A549 (cell line): ENCODE measurements at regions of chr17 and their contacts with region 1.

Region 1: GRCh38 chr17:700504-701094 is 14.0 kb downstream of the VPS53 start:
- DNase-seq: peak; percentile 35 to 73
- ATAC-seq: peak in 1 of 2 experiments; percentile 71; a peak in 2 of 6 replicates
- H3K4me3 ChIP-seq: no peak overlapping the region
- H3K27ac ChIP-seq: peak overlapping the region in 1 of 2 experiments; percentile 16; a peak in 1 of 6 replicates
- H3K4me1 ChIP-seq: peaks cover 8% of the 10 kb centered on the region
- CTCF ChIP-seq: peak; percentile 94
- EP300 ChIP-seq: no peak
- POLR2A ChIP-seq: no peak
- RAD21 ChIP-seq: peak; percentile 91 to 95

Region 2: DNA sequence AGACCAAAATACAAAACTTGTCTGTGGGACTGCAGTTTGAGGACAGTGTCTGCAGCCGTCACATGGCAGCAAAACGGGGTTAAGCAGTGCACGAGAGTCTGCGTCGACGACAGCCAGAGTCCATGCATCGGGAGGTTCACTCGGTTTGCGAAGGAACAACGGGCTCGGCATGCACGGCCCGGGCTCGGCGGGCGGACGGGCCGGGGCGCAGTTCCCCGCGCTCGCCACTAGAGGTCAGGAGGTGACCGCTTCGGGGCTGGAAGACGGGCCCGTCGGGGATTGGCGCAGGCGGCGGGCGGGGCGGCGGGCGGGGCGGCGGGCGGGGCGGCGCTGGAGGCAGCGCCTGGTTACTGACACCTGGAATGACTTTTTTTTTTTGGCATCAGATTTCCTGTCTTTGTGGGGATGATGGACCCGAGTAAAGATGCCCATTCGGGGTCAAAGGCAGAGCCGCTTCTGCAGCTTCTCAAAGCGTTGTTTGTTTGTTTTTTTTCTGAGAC is 556.8 kb before region 1 on chr17:
- CTCF ChIA-PET with region 1: interaction called, 18 read pairs
- POLR2A ChIA-PET with region 1: no interaction called
- DNase-seq: peak; percentile 85 to 92
- ATAC-seq: peak; percentile 79 to 89
- H3K4me3 ChIP-seq: no peak overlapping the region
- H3K27ac ChIP-seq: no peak overlapping the region
- H3K4me1 ChIP-seq: 0 out of 3 replicates have a peak, but pooled peaks cover 4% of the 10 kb centered on the region
- CTCF ChIP-seq: peak; percentile 95
- EP300 ChIP-seq: no peak
- POLR2A ChIP-seq: no peak
- RAD21 ChIP-seq: peak; percentile 80 to 98

Region 3: GRCh38 chr17:416293-417206 is 284.0 kb before region 1 on chr17:
- CTCF ChIA-PET with region 1: interaction called, 410 read pairs
- POLR2A ChIA-PET with region 1: interaction called, 7 read pairs
- DNase-seq: no peak
- ATAC-seq: no peak
- H3K4me3 ChIP-seq: no peak overlapping the region
- H3K27ac ChIP-seq: no peak overlapping the region
- H3K4me1 ChIP-seq: peaks cover 8% of the 10 kb centered on the region
- CTCF ChIP-seq: no peak
- EP300 ChIP-seq: no peak
- POLR2A ChIP-seq: no peak
- RAD21 ChIP-seq: no peak

Region 4: GRCh38 chr17:538181-538973 is 162.2 kb before region 1 on chr17:
- CTCF ChIA-PET with region 1: interaction called, 10 read pairs
- POLR2A ChIA-PET with region 1: no interaction called
- DNase-seq: no peak
- ATAC-seq: no peak; a peak in 1 of 6 replicates
- H3K4me3 ChIP-seq: no peak overlapping the region
- H3K27ac ChIP-seq: no peak overlapping the region
- H3K4me1 ChIP-seq: no peaks in the 10 kb centered on the region
- CTCF ChIP-seq: no peak
- EP300 ChIP-seq: no peak
- POLR2A ChIP-seq: no peak
- RAD21 ChIP-seq: no peak

Region 5: GRCh38 chr17:661509-661908 is 39.1 kb before region 1 on chr17:
- CTCF ChIA-PET with region 1: interaction called, 31 read pairs
- POLR2A ChIA-PET with region 1: no interaction called
- DNase-seq: no peak
- ATAC-seq: no peak
- H3K4me3 ChIP-seq: no peak overlapping the region
- H3K27ac ChIP-seq: no peak overlapping the region
- H3K4me1 ChIP-seq: no peaks in the 10 kb centered on the region
- CTCF ChIP-seq: no peak
- EP300 ChIP-seq: no peak
- POLR2A ChIP-seq: no peak
- RAD21 ChIP-seq: no peak

Region 6: DNA sequence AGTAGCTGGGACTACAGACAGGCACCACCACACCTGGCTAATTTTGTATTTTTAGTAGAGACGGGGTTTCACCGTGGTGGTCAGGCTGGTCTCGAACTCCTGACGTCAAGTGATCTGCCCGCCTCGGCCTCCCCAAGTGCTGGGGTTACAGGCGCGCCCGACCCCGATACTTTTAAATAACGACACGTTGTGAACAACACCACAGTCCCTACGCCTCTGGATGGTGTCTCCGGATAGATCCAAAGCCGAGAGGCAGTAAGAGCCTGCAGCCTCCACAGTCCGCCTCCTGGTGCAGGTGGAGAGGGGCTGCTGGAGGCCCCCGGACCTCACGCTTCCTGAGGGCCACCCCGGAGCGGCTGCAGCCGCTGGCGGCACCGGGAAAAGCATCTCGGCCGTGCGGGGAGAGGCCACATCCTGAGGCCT is 31.1 kb after region 1 on chr17:
- CTCF ChIA-PET with region 1: interaction called, 13 read pairs
- POLR2A ChIA-PET with region 1: no interaction called
- DNase-seq: no peak
- ATAC-seq: peak; percentile 58 to 64
- H3K4me3 ChIP-seq: peak overlapping the region; percentile 80
- H3K27ac ChIP-seq: peak overlapping the region; percentile 89 to 96
- H3K4me1 ChIP-seq: peaks cover 14% of the 10 kb centered on the region
- CTCF ChIP-seq: no peak
- EP300 ChIP-seq: no peak
- POLR2A ChIP-seq: no peak
- RAD21 ChIP-seq: no peak